Activated CD4-positive, alpha-beta T cell treated with anti-CD3 and anti-CD28 coated beads for 36 hours (primary cell): ENCODE measurements at regions of chr9 and their contacts with region 1.

Region 1: DNA sequence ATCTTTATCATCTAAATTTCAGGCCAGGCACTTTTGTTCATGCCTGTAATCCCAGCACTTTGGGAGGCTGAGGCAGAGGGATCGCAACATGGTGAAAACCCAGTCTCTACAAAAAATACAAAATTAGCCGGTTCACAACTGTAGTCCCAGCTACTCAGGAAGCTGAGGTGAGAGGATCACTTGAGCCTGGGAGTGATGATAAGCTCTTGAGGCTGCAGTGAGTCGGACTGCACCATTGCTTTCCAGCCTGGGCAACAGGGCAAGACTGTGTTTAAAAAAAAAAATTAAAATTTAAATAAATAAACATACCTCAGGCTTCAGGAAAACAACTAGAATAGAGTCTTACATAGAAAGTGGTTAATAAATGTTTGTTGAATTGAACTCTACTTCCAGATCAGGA is 147.4 kb downstream of the AGTPBP1 start:
- DNase-seq: no peak
- ATAC-seq: no peak
- H3K4me3 Mint-ChIP-seq: no peak overlapping the region
- H3K27ac Mint-ChIP-seq: no peak overlapping the region
- H3K4me1 Mint-ChIP-seq: no peaks in the 10 kb centered on the region
- H3K27me3 Mint-ChIP-seq: no peaks in the 10 kb centered on the region

Region 2: GRCh38 chr9:85478847-85479246 is 115.5 kb before region 1 on chr9:
- CTCF ChIA-PET with region 1: no interaction called
- POLR2A ChIA-PET with region 1: no interaction called
- intact Hi-C with region 1: no loop called
- DNase-seq: no peak
- ATAC-seq: no peak
- H3K4me3 Mint-ChIP-seq: no peak overlapping the region
- H3K27ac Mint-ChIP-seq: no peak overlapping the region
- H3K4me1 Mint-ChIP-seq: no peaks in the 10 kb centered on the region
- H3K27me3 Mint-ChIP-seq: peaks cover 18% of the 10 kb centered on the region

Region 3: GRCh38 chr9:85522459-85523092 is 71.7 kb before region 1 on chr9:
- CTCF ChIA-PET with region 1: no interaction called
- POLR2A ChIA-PET with region 1: no interaction called
- intact Hi-C with region 1: no loop called
- DNase-seq: peak; percentile 60
- ATAC-seq: peak; percentile 89
- H3K4me3 Mint-ChIP-seq: peak overlapping the region; percentile 73
- H3K27ac Mint-ChIP-seq: no peak overlapping the region
- H3K4me1 Mint-ChIP-seq: peaks cover 5% of the 10 kb centered on the region
- H3K27me3 Mint-ChIP-seq: peaks cover 41% of the 10 kb centered on the region

Region 4: DNA sequence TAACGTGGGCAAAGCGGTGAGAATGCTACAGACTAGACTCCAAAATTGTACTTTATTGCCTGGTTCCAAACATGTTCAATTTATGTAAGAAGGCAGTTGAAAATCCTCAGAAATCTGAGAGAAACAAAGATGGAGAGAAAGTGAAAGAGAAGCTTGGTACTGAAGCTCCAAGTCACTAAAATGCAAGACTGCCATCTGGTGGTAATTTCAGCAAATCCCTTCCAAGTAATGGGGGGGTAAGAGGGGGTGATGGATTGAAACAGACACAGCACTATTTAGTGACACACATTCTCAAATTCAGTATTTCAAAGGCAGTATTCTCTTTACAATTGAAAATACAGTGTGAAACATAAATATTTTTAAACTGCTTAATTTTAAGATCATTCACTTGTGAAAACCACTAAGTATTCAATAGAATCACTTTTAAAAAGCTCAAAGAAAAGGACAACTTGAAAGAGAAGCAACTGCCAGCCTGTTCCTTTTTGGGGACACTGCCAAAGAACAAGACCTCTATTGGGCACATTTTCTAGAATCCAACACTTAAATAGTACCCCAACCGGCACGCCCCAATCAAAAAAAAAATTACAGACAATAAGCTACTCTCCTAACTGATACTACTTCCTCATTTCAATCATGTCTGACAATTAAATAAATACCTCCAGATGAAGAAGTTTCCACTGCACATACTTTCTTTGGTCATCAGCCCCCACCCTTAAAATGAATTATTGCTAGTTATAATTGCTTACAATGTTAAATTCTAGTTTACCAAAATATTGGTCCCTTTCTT is 16.0 kb after region 1 on chr9:
- CTCF ChIA-PET with region 1: interaction called, 12 read pairs
- POLR2A ChIA-PET with region 1: no interaction called
- intact Hi-C with region 1: no loop called
- DNase-seq: no peak
- ATAC-seq: peak; percentile 92
- H3K4me3 Mint-ChIP-seq: peak overlapping the region; percentile 32
- H3K27ac Mint-ChIP-seq: peak overlapping the region; percentile 64
- H3K4me1 Mint-ChIP-seq: peaks cover 8% of the 10 kb centered on the region
- H3K27me3 Mint-ChIP-seq: no peaks in the 10 kb centered on the region